ENCODE measurements at regions of chr2 and their contacts with region 1.

Region 1: DNA sequence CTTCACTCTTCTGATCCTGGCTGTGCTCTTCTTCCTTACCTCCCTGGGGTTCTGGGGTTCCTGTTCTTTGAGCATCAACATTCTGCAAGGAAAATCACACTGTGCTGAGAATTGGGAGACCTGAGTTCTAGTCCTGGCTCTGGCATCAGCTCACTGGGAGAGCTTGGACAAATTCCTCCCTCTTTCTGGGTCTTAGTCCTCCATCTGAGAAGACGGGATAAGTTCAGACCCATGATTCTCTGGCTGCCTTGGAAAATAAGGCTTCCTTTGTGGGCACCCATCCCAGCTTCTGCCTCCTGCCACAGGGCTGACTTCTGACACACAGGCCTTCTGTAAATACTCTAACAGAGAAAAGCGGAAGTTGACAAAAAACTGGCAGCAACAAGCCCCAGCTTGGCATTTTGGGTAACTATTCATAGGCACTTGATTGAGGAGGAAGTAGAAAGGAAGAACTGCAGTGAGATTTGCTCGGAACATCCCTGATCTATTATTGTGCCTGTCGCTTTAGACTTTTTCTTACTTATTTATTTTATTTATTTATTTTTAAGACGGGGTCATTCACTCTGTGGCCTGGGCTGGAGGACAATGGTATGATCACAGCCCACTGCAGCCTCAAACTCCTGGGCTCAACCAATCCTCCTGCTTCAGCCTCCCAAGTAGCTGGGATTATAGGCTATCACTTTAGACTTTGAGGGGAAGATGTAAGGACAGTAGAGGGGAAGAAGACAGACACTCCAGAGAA is 7.9 kb downstream of the PCBP1 start:
- DNase-seq: peak; percentile 71
- H3K4me3 ChIP-seq: no peak overlapping the region
- H3K27ac ChIP-seq: peak overlapping the region; percentile 49
- H3K4me1 ChIP-seq: peaks cover 13% of the 10 kb centered on the region
- H3K27me3 ChIP-seq: no peaks in the 10 kb centered on the region
- CTCF ChIP-seq: no peak

Region 2: GRCh38 chr2:70132244-70133126 is 37.3 kb after region 1 on chr2:
- CTCF ChIA-PET with region 1: no interaction called
- dilution Hi-C with region 1: no loop called
- in situ Hi-C with region 1: loop called in 1 of 2 experiments (anchors 5 kb)
- intact Hi-C with region 1: no loop called
- DNase-seq: peak; percentile 45
- H3K4me3 ChIP-seq: peak overlapping the region in 2 of 3 experiments; percentile 18 to 29
- H3K27ac ChIP-seq: peak overlapping the region; percentile 65
- H3K4me1 ChIP-seq: peaks cover 30% of the 10 kb centered on the region
- H3K27me3 ChIP-seq: no peaks in the 10 kb centered on the region
- CTCF ChIP-seq: no peak

Region 3: DNA sequence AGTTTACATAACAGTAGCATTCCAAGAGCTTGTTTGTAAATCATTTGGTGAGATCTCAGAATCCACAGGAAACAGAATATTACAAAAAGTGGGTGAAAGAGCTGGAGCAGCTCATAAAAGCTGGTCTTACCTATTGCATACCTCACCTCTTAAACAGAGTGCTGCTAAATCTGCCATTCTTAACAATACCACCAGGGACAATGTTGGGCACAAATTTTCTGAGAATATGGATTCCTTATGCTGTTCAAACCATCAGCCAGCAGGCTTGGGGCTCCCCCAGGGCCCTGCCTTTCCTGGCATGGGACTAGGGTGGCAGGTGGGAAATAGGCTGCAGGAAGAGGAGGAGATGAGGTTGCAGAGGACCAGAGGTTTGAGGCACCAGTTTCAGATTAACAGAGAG is 402.9 kb after region 1 on chr2:
- CTCF ChIA-PET with region 1: no interaction called
- dilution Hi-C with region 1: no loop called
- in situ Hi-C with region 1: no loop called
- intact Hi-C with region 1: no loop called
- DNase-seq: no peak
- H3K4me3 ChIP-seq: no peak overlapping the region
- H3K27ac ChIP-seq: no peak overlapping the region
- H3K4me1 ChIP-seq: peaks cover 14% of the 10 kb centered on the region
- H3K27me3 ChIP-seq: no peaks in the 10 kb centered on the region
- CTCF ChIP-seq: peak; percentile 32 to 48